ENCODE measurements at regions of chr17 and their contacts with region 1.

Region 1: DNA sequence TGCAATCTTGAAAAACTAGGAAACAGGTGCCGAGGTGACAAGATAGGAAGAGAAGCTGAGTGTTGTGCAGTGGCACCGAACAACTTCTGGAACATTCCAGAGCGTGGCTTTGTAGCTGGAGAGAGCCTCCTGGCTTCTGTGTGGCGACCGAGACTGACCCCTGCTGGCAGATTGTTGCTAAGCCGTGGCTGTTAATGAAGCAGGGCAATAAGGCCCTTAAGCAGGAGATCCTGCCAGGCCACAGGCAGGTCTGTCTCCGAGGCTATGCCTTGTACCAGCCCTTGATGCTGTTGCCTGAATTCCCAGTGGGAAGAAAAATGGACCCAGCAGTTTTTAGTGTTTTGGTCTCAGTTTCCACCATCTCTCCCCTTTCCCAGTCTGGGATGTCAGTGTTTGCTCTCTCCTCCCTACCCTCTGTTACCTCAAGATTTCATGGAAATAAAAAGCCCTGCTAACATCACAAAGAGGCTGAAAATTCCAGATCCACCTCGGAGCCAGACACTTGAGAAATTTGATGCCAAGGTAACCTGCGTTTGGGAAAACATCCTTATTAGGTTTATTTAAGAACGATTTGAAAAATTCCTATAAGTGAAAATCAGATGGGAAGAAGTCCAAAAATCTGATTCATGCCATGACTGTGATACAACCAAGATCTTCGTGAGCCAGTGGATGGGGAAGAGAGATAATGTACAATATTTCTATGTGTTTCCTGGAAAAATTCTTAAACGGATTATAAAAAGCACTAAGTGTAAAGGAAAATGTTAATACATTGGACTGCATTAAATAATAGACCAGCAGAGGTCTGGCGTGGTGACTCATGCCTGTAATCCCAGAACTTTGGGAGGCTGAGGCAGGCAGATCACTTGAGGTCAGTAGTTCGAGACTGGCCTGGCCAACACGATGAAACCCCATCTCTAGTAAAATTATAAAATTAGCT is 265.1 kb downstream of the PRKCA start:
- DNase-seq: peak; percentile 71 to 95
- H3K4me3 ChIP-seq: no peak overlapping the region
- H3K27ac ChIP-seq: peak overlapping the region; percentile 53
- H3K4me1 ChIP-seq: peaks cover 34% of the 10 kb centered on the region
- H3K27me3 ChIP-seq: no peaks in the 10 kb centered on the region
- CTCF ChIP-seq: peak; percentile 86

Region 2: GRCh38 chr17:66255112-66255511 is 312.4 kb before region 1 on chr17:
- CTCF ChIA-PET with region 1: interaction called, 8 read pairs
- POLR2A ChIA-PET with region 1: no interaction called
- intact Hi-C with region 1: loop called (anchors 1 kb)
- DNase-seq: peak; percentile 34 to 79
- H3K4me3 ChIP-seq: no peak overlapping the region
- H3K27ac ChIP-seq: no peak overlapping the region
- H3K4me1 ChIP-seq: peaks cover 10% of the 10 kb centered on the region
- H3K27me3 ChIP-seq: no peaks in the 10 kb centered on the region
- CTCF ChIP-seq: peak; percentile 86

Region 3: GRCh38 chr17:66301797-66302741 is 265.4 kb before region 1 on chr17 and contains the start of gene PRKCA:
- CTCF ChIA-PET with region 1: no interaction called
- POLR2A ChIA-PET with region 1: no interaction called
- intact Hi-C with region 1: loop called (anchors 10 kb)
- DNase-seq: peak in 1 of 2 experiments; percentile 83
- H3K4me3 ChIP-seq: peak within 1 kb of the TSS; percentile 96
- H3K27ac ChIP-seq: peak within 1 kb of the TSS; percentile 56
- H3K4me1 ChIP-seq: peaks cover 30% of the 10 kb centered on the region
- H3K27me3 ChIP-seq: no peaks in the 10 kb centered on the region
- CTCF ChIP-seq: no peak
- total RNA-seq, gene PRKCA: 23.1 and 23.8 TPM in 2 replicates

Region 4: GRCh38 chr17:66619206-66619605 is 51.7 kb after region 1 on chr17:
- CTCF ChIA-PET with region 1: no interaction called
- POLR2A ChIA-PET with region 1: no interaction called
- intact Hi-C with region 1: loop called (anchors 5 kb)
- DNase-seq: no peak
- H3K4me3 ChIP-seq: no peak overlapping the region
- H3K27ac ChIP-seq: no peak overlapping the region
- H3K4me1 ChIP-seq: no peaks in the 10 kb centered on the region
- H3K27me3 ChIP-seq: no peaks in the 10 kb centered on the region
- CTCF ChIP-seq: no peak

Region 5: GRCh38 chr17:66673668-66674315 is 106.3 kb after region 1 on chr17:
- CTCF ChIA-PET with region 1: interaction called, 4 read pairs
- POLR2A ChIA-PET with region 1: no interaction called
- intact Hi-C with region 1: loop called (anchors 5 kb)
- DNase-seq: peak; percentile 82 to 87
- H3K4me3 ChIP-seq: no peak overlapping the region
- H3K27ac ChIP-seq: peak overlapping the region; percentile 48
- H3K4me1 ChIP-seq: peaks cover 44% of the 10 kb centered on the region
- H3K27me3 ChIP-seq: no peaks in the 10 kb centered on the region
- CTCF ChIP-seq: peak; percentile 87

Measured in PC-9 (cell line).